Esophagus muscularis mucosa (tissue), 4 donors: ENCODE measurements at regions of chr1 and their contacts with region 1.

Region 1: GRCh38 chr1:175035865-175036264 is 12.6 kb upstream of the MRPS14 start:
- DNase-seq: no peak
- H3K4me3 ChIP-seq: no peak overlapping the region
- H3K27ac ChIP-seq: no peak overlapping the region
- H3K4me1 ChIP-seq: no peaks in the 10 kb centered on the region
- H3K27me3 ChIP-seq: no peaks in the 10 kb centered on the region
- CTCF ChIP-seq: no peak
- EP300 ChIP-seq: no peak
- POLR2A ChIP-seq: no peak

Region 2: GRCh38 chr1:175129997-175130648 is 94.3 kb after region 1 on chr1:
- intact Hi-C with region 1: loop called (anchors 5 kb)
- DNase-seq: no peak
- H3K4me3 ChIP-seq: no peak overlapping the region
- H3K27ac ChIP-seq: peak overlapping the region; percentile 73 to 84 (median 80)
- H3K4me1 ChIP-seq: peaks cover 52 to 90% (median 89%) of the 10 kb centered on the region in 4 donors
- H3K27me3 ChIP-seq: no peaks in the 10 kb centered on the region
- CTCF ChIP-seq: no peak
- EP300 ChIP-seq: no peak
- POLR2A ChIP-seq: no peak

Region 3: GRCh38 chr1:175146529-175147213 is 110.8 kb after region 1 on chr1:
- intact Hi-C with region 1: loop called (anchors 2 kb)
- DNase-seq: no peak
- H3K4me3 ChIP-seq: no peak overlapping the region
- H3K27ac ChIP-seq: no peak overlapping the region
- H3K4me1 ChIP-seq: peaks cover 5 to 32% (median 27%) of the 10 kb centered on the region in 4 donors
- H3K27me3 ChIP-seq: no peaks in the 10 kb centered on the region
- CTCF ChIP-seq: peak; percentile 66 to 77 (median 69)
- EP300 ChIP-seq: no peak
- POLR2A ChIP-seq: no peak

Region 4: GRCh38 chr1:175319418-175320230 is 283.8 kb after region 1 on chr1:
- intact Hi-C with region 1: loop called (anchors 2 kb)
- DNase-seq: no peak
- H3K4me3 ChIP-seq: no peak overlapping the region
- H3K27ac ChIP-seq: peak overlapping the region; percentile 41 to 72 (median 60)
- H3K4me1 ChIP-seq: peaks cover 18 to 25% (median 22%) of the 10 kb centered on the region in 4 donors
- H3K27me3 ChIP-seq: no peaks in the 10 kb centered on the region
- CTCF ChIP-seq: peak; percentile 88 to 91 (median 90)
- EP300 ChIP-seq: no peak
- POLR2A ChIP-seq: no peak

Region 5: GRCh38 chr1:175394739-175395138 is 358.9 kb after region 1 on chr1:
- intact Hi-C with region 1: no loop called
- DNase-seq: no peak
- H3K4me3 ChIP-seq: no peak overlapping the region
- H3K27ac ChIP-seq: no peak overlapping the region
- H3K4me1 ChIP-seq: peaks cover 0 to 4% (median under 1%) of the 10 kb centered on the region in 4 donors
- H3K27me3 ChIP-seq: no peaks in the 10 kb centered on the region
- CTCF ChIP-seq: no peak
- EP300 ChIP-seq: no peak
- POLR2A ChIP-seq: no peak